Heart right ventricle (tissue), 16 donors: ENCODE measurements at regions of chr4 and their contacts with region 1.

Region 1: DNA sequence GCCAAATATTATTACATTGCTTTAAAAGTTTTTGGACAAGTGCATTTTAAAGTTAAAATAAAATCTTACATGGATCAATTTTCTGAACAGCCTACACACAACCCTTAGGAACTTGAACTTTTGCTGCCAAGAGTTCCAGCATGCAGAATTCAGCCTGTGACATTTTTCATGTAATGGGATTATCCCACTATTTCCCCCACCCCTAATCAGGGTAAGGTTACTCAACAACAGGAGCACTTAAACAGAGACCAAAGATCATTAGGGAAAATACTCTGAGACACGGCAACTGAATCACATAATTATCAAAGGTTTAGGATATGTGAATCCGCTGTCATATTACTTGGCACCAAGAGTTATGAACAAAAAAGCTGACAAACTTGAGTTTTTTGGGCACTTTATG is 47.2 kb downstream of the IQCM start:
- DNase-seq: no peak
- ATAC-seq: no peak
- H3K4me3 ChIP-seq: no peak overlapping the region
- H3K27ac ChIP-seq: no peak overlapping the region
- H3K4me1 ChIP-seq: no peaks in the 10 kb centered on the region
- H3K27me3 ChIP-seq: no peaks in the 10 kb centered on the region
- CTCF ChIP-seq: no peak

Region 2: GRCh38 chr4:149746276-149746675 is 22.2 kb before region 1 on chr4:
- intact Hi-C with region 1: loop called in 1 of 10 experiments (anchors 2 kb)
- DNase-seq: no peak
- ATAC-seq: no peak
- H3K4me3 ChIP-seq: no peak overlapping the region
- H3K27ac ChIP-seq: no peak overlapping the region
- H3K4me1 ChIP-seq: no peaks in the 10 kb centered on the region
- H3K27me3 ChIP-seq: no peaks in the 10 kb centered on the region
- CTCF ChIP-seq: no peak

Region 3: GRCh38 chr4:149781150-149781549 is 12.7 kb after region 1 on chr4:
- intact Hi-C with region 1: no loop called
- DNase-seq: no peak
- ATAC-seq: no peak
- H3K4me3 ChIP-seq: no peak overlapping the region
- H3K27ac ChIP-seq: no peak overlapping the region
- H3K4me1 ChIP-seq: no peaks in the 10 kb centered on the region
- H3K27me3 ChIP-seq: no peaks in the 10 kb centered on the region
- CTCF ChIP-seq: no peak

Region 4: GRCh38 chr4:150680651-150681050 is 912.2 kb after region 1 on chr4:
- intact Hi-C with region 1: no loop called
- DNase-seq: no peak
- ATAC-seq: no peak
- H3K4me3 ChIP-seq: no peak overlapping the region
- H3K27ac ChIP-seq: no peak overlapping the region
- H3K4me1 ChIP-seq: no peaks in the 10 kb centered on the region
- H3K27me3 ChIP-seq: no peaks in the 10 kb centered on the region
- CTCF ChIP-seq: no peak